WTC11 (cell line): ENCODE measurements at regions of chr1 and their contacts with region 1.

Region 1: GRCh38 chr1:28208818-28209441 is 23.9 kb downstream of the DNAJC8 start:
- DNase-seq: peak; percentile 61
- ATAC-seq: peak; percentile 72
- H3K4me3 Mint-ChIP-seq: no peak overlapping the region
- H3K27ac Mint-ChIP-seq: peak overlapping the region; percentile 54
- H3K4me1 Mint-ChIP-seq: peaks cover 6% of the 10 kb centered on the region
- H3K27me3 Mint-ChIP-seq: no peaks in the 10 kb centered on the region
- CTCF ChIP-seq: no peak; the same call in 1 of the 2 replicates

Region 2: GRCh38 chr1:28194326-28195035 is 14.4 kb before region 1 on chr1:
- CTCF ChIA-PET with region 1: interaction called, 11 read pairs
- POLR2A ChIA-PET with region 1: interaction called, 3 read pairs
- DNase-seq: no peak
- ATAC-seq: no peak
- H3K4me3 Mint-ChIP-seq: no peak overlapping the region
- H3K27ac Mint-ChIP-seq: no peak overlapping the region
- H3K4me1 Mint-ChIP-seq: peaks cover 33% of the 10 kb centered on the region
- H3K27me3 Mint-ChIP-seq: no peaks in the 10 kb centered on the region
- CTCF ChIP-seq: no peak